ENCODE measurements at regions of chr1 and their contacts with region 1.

Region 1: GRCh38 chr1:202861420-202862200 is 27.3 kb downstream of the RABIF start:
- DNase-seq: peak; percentile 97

Region 2: DNA sequence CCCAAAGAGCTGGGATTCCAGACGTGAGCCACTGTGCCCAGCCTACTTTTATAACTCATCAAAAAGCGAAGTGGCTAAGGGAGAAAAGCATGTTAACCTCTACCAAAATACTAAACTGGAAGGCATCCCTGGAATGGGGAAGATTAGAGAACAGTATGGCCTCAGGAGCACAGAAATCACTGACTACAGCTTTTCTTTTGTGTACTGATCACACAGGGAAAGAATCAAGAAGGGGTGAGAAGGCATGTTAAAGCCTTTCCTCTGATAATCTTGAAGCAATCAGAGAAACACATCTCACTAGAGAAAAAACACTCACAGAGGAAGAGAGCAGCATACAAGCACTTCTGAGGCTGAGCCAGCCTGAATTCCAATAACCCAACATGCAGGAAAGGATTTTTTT is 40.2 kb before region 1 on chr1:
- intact Hi-C with region 1: loop called in 1 of 2 experiments (anchors 2 kb)
- DNase-seq: no peak

Measured in posterior vena cava (tissue), 2 donors.